ENCODE measurements at regions of chrX and their contacts with region 1.

Region 1: GRCh38 chrX:106619797-106620196 is 8.0 kb downstream of the RADX start:
- DNase-seq: peak; percentile 1
- H3K4me3 Mint-ChIP-seq: no peak overlapping the region
- H3K27ac Mint-ChIP-seq: no peak overlapping the region
- H3K4me1 Mint-ChIP-seq: peaks cover 6% of the 10 kb centered on the region
- H3K27me3 Mint-ChIP-seq: no peaks in the 10 kb centered on the region
- CTCF ChIP-seq: no peak

Region 2: DNA sequence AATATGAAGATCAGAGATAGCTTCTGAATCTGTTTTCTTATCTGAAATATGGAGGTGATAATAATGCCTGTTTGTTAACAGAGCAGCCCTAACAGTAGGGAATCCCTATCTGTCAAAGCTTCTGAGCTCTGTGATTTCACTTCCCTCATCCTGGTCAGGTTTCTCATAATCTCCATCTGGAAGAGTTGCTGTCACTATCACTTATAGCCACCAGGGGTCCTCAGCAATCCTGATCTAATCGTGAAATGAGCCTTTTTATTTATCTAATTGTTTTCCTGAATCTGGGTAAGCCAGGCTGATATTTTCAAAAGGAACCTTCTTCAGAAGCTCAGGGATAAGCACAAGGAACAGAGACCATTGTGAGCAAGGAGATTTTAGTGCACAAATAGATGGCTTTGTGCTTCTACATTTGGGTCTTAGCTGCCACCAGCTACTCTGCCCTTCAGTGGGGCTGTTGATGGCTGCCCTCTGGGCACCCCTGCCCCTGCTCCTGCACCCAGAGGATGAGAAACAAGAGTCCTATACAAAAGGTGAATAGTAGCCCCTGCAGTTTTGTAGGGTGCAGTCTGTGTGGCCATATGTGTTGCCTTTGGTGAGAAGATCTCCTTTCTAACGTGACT is 204.4 kb before region 1 on chrX:
- CTCF ChIA-PET with region 1: interaction called, 4 read pairs
- intact Hi-C with region 1: loop called (anchors 5 kb)
- DNase-seq: peak; percentile 22
- H3K4me3 Mint-ChIP-seq: no peak overlapping the region
- H3K27ac Mint-ChIP-seq: no peak overlapping the region
- H3K4me1 Mint-ChIP-seq: no peaks in the 10 kb centered on the region
- H3K27me3 Mint-ChIP-seq: peaks cover 35% of the 10 kb centered on the region
- CTCF ChIP-seq: peak; percentile 61